Calu3 (cell line): ENCODE measurements at regions of chr17 and their contacts with region 1.

Region 1: GRCh38 chr17:71409712-71410111 is 711.1 kb upstream of the SOX9 start:
- DNase-seq: no peak
- H3K4me3 Mint-ChIP-seq: no peak overlapping the region
- H3K27ac Mint-ChIP-seq: peak overlapping the region; percentile 3
- H3K4me1 Mint-ChIP-seq: peaks cover 59% of the 10 kb centered on the region
- H3K27me3 Mint-ChIP-seq: no peaks in the 10 kb centered on the region
- CTCF ChIP-seq: no peak

Region 2: GRCh38 chr17:71327376-71328059 is 82.2 kb before region 1 on chr17:
- CTCF ChIA-PET with region 1: no interaction called
- intact Hi-C with region 1: loop called (anchors 2 kb)
- DNase-seq: no peak
- H3K4me3 Mint-ChIP-seq: peak overlapping the region; percentile 13
- H3K27ac Mint-ChIP-seq: peak overlapping the region; percentile 81
- H3K4me1 Mint-ChIP-seq: peaks cover 39% of the 10 kb centered on the region
- H3K27me3 Mint-ChIP-seq: no peaks in the 10 kb centered on the region
- CTCF ChIP-seq: no peak